IMR-90 (cell line): ENCODE measurements at regions of chr13 and their contacts with region 1.

Region 1: DNA sequence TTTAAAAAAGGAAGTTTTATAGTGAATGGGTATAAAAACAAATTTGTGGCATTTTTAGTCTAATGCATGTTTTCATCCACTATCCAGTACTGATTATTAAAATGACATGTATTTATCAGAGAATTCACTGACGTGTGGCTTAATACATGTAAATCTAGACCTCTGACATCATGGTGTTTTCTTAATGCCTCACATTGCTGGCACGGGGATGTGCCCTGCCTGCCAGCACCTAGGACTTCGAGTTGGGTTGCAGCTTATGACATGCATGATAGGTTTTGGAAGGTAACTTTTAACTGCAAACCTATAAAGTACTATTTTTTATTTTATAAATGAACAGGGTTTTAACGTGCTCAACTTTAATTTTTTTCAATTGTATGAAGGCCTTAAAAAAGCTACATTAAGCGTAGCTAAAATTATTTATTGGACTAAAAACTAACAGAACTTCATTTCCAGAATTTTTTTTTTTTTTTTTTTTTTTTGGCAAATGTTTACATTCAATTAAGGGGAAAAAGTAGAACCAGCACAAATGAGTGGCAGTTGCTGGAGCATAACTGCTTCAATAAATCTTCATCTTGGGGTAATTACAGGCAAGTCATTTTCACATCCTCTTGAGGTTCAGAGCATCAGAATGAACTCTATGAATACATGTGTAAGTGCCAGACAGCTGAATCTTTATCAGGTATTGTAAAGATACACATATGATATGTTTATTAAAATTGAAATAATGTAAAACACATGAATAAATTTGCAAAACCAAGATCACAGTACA is 16.3 kb downstream of the METTL21C start:
- DNase-seq: no peak
- ATAC-seq: no peak
- H3K4me3 ChIP-seq: no peak overlapping the region
- H3K27ac ChIP-seq: no peak overlapping the region
- H3K4me1 ChIP-seq: no peaks in the 10 kb centered on the region
- H3K27me3 ChIP-seq: no peaks in the 10 kb centered on the region
- CTCF ChIP-seq: no peak
- POLR2A ChIP-seq: no peak
- RAD21 ChIP-seq: no peak

Region 2: GRCh38 chr13:102484329-102484728 is 194.2 kb before region 1 on chr13:
- CTCF ChIA-PET with region 1: no interaction called
- POLR2A ChIA-PET with region 1: no interaction called
- dilution Hi-C with region 1: no loop called
- in situ Hi-C with region 1: no loop called
- intact Hi-C with region 1: no loop called
- DNase-seq: peak; percentile 4
- ATAC-seq: peak; percentile 37; the same call in 1 of the 2 replicates
- H3K4me3 ChIP-seq: no peak overlapping the region
- H3K27ac ChIP-seq: no peak overlapping the region
- H3K4me1 ChIP-seq: no peaks in the 10 kb centered on the region
- H3K27me3 ChIP-seq: no peaks in the 10 kb centered on the region
- CTCF ChIP-seq: no peak
- POLR2A ChIP-seq: no peak
- RAD21 ChIP-seq: no peak

Region 3: DNA sequence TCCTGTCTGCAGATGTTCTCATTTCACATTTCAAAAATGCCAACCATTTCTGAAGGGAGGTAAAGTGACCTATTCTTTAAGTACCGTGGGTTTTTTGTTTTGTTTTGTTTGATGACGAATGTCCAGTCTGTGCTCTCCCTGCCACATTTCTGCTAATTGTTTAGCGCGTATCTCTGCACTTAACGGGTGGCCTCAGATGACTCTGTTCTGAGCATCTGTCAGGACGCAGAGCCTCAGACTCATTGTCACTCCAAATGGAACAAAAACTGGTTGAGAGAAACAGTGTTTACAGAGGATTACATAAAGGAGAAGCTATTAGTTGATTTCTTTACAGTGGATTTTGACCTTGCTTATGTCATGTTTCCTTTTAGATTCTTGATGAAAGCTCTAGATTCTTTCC is 58.0 kb before region 1 on chr13:
- CTCF ChIA-PET with region 1: no interaction called
- POLR2A ChIA-PET with region 1: no interaction called
- dilution Hi-C with region 1: no loop called
- in situ Hi-C with region 1: no loop called
- intact Hi-C with region 1: loop called (anchors 5 kb)
- DNase-seq: no peak
- ATAC-seq: no peak
- H3K4me3 ChIP-seq: no peak overlapping the region
- H3K27ac ChIP-seq: no peak overlapping the region
- H3K4me1 ChIP-seq: peaks cover 2% of the 10 kb centered on the region; the same call in 1 of the 2 replicates
- H3K27me3 ChIP-seq: no peaks in the 10 kb centered on the region
- CTCF ChIP-seq: no peak
- POLR2A ChIP-seq: no peak
- RAD21 ChIP-seq: no peak